ENCODE measurements at regions of chr16 and their contacts with region 1.

Region 1: DNA sequence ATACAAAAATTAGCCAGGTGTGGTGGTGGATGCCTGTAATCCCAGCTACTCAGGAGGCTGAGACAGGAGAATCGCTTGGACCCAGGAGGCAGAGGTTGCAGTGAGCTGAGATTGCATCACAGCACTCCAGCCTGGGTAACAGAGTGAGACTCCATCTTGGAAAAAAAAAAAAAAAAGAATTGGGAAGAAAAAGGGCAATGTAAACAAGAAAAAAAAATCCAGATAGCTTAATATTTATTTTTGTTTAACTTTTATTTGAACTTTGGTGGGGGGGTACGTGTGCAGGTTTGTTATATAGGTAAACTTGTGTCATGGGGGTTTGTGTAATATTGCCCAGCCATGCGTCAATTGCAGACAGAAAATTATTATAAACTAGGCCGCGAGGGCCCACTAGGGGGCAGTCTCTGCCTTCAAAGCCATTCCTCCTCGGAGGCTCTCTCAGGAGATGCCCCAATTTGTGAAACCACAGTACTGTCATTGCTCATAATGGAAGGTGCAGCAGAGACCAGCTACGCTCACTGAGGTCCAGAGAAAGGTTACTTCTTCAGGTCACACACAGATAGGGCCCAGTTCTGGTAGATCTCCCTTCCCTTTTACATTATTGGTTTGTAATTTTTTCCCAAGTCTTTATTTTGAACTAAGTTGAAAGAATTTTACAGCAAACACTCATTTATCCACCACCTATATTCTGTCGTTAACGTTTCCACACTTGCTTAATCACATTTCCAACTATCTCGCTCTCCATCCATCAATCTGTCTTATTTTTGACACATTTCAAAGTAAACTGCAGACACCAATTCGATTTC is 206.2 kb downstream of the PRKCB start:
- DNase-seq: peak; percentile 79

Region 2: GRCh38 chr16:24504472-24505345 is 462.7 kb after region 1 on chr16:
- CTCF ChIA-PET with region 1: interaction called, 23 read pairs
- POLR2A ChIA-PET with region 1: no interaction called
- DNase-seq: peak; percentile 76

Measured in HEK293T (cell line).